Naive thymus-derived CD4-positive, alpha-beta T cell (primary cell): ENCODE measurements at regions of chr20 and their contacts with region 1.

Region 1: GRCh38 chr20:4780245-4780644 is 58.5 kb downstream of the PRND start:
- DNase-seq: peak in 6 of 9 donors; percentile 18 to 40 (median 27)
- ATAC-seq: peak; percentile 41
- H3K4me3 ChIP-seq: no peak overlapping the region
- H3K4me3 Mint-ChIP-seq: no peak overlapping the region
- H3K27ac ChIP-seq: no peak overlapping the region
- H3K27ac Mint-ChIP-seq: peak overlapping the region in 8 of 9 donors; percentile 63 to 82 (median 74)
- H3K4me1 ChIP-seq: no peaks in the 10 kb centered on the region
- H3K4me1 Mint-ChIP-seq: peaks cover 6 to 28% (median 16%) of the 10 kb centered on the region in 7 donors
- H3K27me3 ChIP-seq: no peaks in the 10 kb centered on the region
- H3K27me3 Mint-ChIP-seq: no peaks in the 10 kb centered on the region

Region 2: DNA sequence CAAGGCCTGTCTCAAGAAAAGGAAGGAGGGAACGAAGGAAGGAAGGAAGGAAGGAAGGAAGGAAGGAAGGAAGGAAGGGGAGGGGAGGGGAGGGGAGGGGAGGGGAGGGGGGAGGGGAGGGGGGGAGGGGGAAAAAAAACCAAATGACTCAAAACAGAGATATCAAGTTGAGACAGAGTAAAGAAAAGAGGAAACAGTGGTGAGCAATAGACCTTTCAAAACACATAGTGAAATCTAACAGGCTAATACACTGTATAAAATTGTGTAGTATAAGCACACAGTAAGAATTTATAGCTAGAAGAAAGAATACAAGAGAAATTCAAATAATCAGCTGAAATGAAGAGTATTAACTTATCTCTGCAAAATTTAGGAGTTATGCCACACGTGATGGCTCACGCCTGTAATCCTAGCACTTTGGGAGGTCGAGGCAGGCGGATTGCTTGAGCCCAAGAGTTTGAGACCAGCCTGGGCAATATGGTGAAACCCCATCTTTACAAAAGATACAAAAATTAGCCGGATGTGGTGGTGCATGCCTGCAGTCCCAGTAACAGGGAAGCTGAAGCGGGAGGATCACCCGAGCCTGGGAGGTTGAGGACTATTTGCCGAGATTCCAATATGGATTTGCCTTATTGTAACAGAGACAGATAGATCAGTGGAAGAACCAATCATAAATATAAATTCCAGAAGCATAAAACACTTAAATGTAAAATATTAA is 64.7 kb after region 1 on chr20:
- CTCF ChIA-PET with region 1: no interaction called
- POLR2A ChIA-PET with region 1: no interaction called
- intact Hi-C with region 1: loop called in 1 of 2 experiments (anchors 5 kb)
- DNase-seq: no peak
- ATAC-seq: peak; percentile 73
- H3K4me3 ChIP-seq: no peak overlapping the region
- H3K4me3 Mint-ChIP-seq: peak overlapping the region in 2 of 10 donors; percentile 60 to 67
- H3K27ac ChIP-seq: no peak overlapping the region
- H3K27ac Mint-ChIP-seq: peak overlapping the region in 7 of 9 donors; percentile 23 to 92 (median 74)
- H3K4me1 ChIP-seq: no peaks in the 10 kb centered on the region
- H3K4me1 Mint-ChIP-seq: peaks cover 0 to 9% (median 6%) of the 10 kb centered on the region in 7 donors
- H3K27me3 ChIP-seq: no peaks in the 10 kb centered on the region
- H3K27me3 Mint-ChIP-seq: peaks cover 0 to 6% (median 0%) of the 10 kb centered on the region in 5 donors

Region 3: GRCh38 chr20:4855555-4855954 is 75.3 kb after region 1 on chr20:
- CTCF ChIA-PET with region 1: no interaction called
- POLR2A ChIA-PET with region 1: no interaction called
- intact Hi-C with region 1: loop called in 1 of 2 experiments (anchors 5 kb)
- DNase-seq: no peak
- ATAC-seq: no peak
- H3K4me3 ChIP-seq: no peak overlapping the region
- H3K4me3 Mint-ChIP-seq: no peak overlapping the region
- H3K27ac ChIP-seq: no peak overlapping the region
- H3K27ac Mint-ChIP-seq: peak overlapping the region in 2 of 9 donors; percentile 2 to 30
- H3K4me1 ChIP-seq: no peaks in the 10 kb centered on the region
- H3K4me1 Mint-ChIP-seq: peaks cover 0 to 11% (median 0%) of the 10 kb centered on the region in 7 donors
- H3K27me3 ChIP-seq: no peaks in the 10 kb centered on the region
- H3K27me3 Mint-ChIP-seq: no peaks in the 10 kb centered on the region

Region 4: DNA sequence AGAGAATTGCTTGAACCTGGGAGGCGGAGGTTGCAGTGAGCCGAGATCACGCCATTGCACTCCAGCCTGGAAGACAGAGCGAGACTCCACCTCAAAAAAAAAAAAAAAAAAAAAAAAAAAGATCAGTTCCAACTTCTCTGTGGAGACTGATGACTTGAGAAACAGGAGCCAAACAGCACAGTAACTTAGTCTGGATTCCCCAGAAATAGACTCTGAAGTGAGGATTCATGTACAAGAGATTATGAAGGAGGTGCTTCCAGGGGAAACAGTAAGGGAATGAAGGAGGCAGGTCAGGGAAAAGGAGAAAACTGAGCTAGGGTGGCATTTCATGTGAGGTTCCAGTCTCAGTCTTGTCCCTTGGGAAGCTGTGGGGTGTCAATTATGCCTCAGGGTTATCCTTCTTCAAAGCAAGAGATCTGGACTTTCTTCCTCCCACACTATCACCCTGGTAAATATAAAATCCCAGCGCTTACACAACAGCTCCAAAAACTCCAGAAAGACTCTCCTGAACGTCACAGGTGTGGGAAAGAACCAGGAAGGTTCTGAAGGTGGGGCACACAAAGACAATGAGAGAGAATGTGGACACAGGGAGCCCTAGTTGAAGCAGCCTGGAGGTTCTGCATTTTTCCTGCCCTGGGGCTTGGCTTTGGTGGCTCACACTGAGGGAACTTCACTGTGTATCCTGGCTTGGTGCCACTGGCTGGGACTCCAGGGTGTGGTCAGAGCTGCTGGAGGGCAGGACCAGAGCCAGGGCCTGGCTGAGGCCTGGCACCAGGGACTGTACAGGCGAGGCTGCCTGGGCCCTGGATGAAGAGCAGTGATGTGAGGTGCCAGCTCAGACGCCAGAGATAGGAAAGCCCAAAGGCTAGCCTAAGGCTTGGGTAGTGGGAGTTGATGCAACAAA is 292.8 kb after region 1 on chr20:
- CTCF ChIA-PET with region 1: no interaction called
- POLR2A ChIA-PET with region 1: no interaction called
- intact Hi-C with region 1: no loop called
- DNase-seq: no peak
- ATAC-seq: peak; percentile 62
- H3K4me3 ChIP-seq: no peak overlapping the region
- H3K4me3 Mint-ChIP-seq: no peak overlapping the region
- H3K27ac ChIP-seq: no peak overlapping the region
- H3K27ac Mint-ChIP-seq: peak overlapping the region in 7 of 9 donors; percentile 34 to 62 (median 46)
- H3K4me1 ChIP-seq: peaks cover 2 to 11% of the 10 kb centered on the region in 2 donors
- H3K4me1 Mint-ChIP-seq: peaks cover 5 to 48% (median 10%) of the 10 kb centered on the region in 7 donors
- H3K27me3 ChIP-seq: no peaks in the 10 kb centered on the region
- H3K27me3 Mint-ChIP-seq: no peaks in the 10 kb centered on the region